ENCODE measurements at regions of chr3 and their contacts with region 1.

Region 1: GRCh38 chr3:144511346-144511745 is 539.7 kb downstream of the DIPK2A start:
- DNase-seq: no peak
- ATAC-seq: no peak
- H3K4me3 ChIP-seq: no peak overlapping the region
- H3K27ac ChIP-seq: no peak overlapping the region
- H3K4me1 ChIP-seq: no peaks in the 10 kb centered on the region
- H3K27me3 ChIP-seq: no peaks in the 10 kb centered on the region
- CTCF ChIP-seq: no peak

Region 2: DNA sequence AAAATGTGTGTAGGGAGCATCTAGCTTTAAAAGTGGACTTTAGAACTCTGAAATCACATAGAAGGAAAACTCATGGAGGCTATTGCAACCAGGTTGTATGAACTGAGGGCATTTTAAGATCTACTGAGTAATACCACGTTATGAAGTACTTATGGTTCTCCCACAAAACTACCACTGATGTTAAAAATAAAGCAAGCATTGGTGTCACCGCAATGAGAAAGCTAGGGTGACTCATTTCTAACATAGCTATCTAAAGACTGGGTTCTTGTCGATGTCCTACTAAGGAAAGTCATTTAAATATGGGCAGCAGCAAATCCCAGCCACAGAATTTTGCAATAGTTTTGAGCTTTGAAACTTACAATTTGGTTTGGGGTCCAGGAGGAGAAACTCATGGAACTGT is 45.0 kb after region 1 on chr3:
- intact Hi-C with region 1: loop called in 1 of 10 experiments (anchors 2 kb)
- DNase-seq: no peak
- ATAC-seq: no peak
- H3K4me3 ChIP-seq: no peak overlapping the region
- H3K27ac ChIP-seq: no peak overlapping the region
- H3K4me1 ChIP-seq: no peaks in the 10 kb centered on the region
- H3K27me3 ChIP-seq: no peaks in the 10 kb centered on the region
- CTCF ChIP-seq: no peak

Region 3: DNA sequence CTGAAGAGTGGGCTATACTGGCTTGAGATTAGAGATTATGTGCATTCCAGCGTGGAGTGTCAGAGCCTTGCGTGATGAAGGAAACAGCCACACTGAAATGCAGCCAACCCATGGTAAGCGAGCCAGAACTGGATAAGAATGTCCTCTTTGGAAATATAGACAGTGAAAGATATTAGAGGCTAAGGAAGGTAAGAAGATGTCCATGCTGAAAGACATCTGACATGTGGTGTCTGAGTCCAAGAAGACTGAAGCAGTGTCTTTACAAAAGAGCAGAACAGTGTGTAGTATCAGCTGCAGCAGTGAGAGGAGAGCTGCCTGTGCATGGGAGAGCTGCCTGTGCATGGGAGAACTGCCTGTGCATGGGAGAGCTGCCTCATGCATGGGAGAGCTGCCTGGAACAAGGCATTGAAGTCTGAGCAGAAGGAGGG is 132.4 kb after region 1 on chr3:
- intact Hi-C with region 1: no loop called
- DNase-seq: no peak
- ATAC-seq: no peak
- H3K4me3 ChIP-seq: no peak overlapping the region
- H3K27ac ChIP-seq: no peak overlapping the region
- H3K4me1 ChIP-seq: no peaks in the 10 kb centered on the region
- H3K27me3 ChIP-seq: no peaks in the 10 kb centered on the region
- CTCF ChIP-seq: no peak